ENCODE measurements at regions of chr3 and their contacts with region 1.

Region 1: GRCh38 chr3:181694805-181695660 is 16.7 kb upstream of the SOX2 start:
- DNase-seq: peak; percentile 68 to 87 (median 82)
- ATAC-seq: peak; percentile 92 to 95
- H3K4me3 ChIP-seq: peak overlapping the region; percentile 15
- H3K27ac ChIP-seq: no peak overlapping the region
- H3K4me1 ChIP-seq: no peaks in the 10 kb centered on the region
- H3K27me3 ChIP-seq: no peaks in the 10 kb centered on the region

Region 2: DNA sequence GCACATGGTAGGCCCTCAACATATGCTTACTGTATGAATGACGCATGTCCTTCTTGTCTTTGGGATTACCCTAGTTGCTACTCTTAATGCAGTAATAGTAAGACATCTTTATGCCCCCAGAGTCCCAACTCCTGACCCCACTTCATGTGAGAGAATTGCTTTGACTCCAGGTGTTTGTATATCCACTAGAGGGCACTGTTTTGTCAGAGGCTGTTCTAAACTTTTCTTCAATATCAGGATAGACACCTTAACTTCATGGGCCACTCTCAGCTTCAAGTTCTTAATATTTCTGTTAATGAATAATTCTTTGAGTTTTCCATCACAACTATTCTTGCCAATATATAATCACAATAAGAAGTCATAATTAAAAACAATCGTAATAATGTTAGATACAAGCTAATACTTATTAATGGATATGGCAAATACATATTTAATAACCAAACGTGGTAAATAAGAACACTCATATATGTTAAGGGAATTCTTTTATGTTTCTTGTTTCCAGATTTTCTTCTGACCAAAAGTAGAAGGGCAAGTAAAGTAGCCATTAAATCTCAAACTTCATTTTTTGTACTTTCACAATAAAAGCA is 368.3 kb before region 1 on chr3:
- intact Hi-C with region 1: loop called in 3 of 4 experiments (anchors 10 kb)
- DNase-seq: peak in 1 of 3 donors; percentile 9
- ATAC-seq: no peak
- H3K4me3 ChIP-seq: no peak overlapping the region
- H3K27ac ChIP-seq: no peak overlapping the region
- H3K4me1 ChIP-seq: no peaks in the 10 kb centered on the region
- H3K27me3 ChIP-seq: no peaks in the 10 kb centered on the region

Measured in right cardiac atrium (tissue), 5 donors.